Adrenal gland (tissue), 19 donors: ENCODE measurements at regions of chr15 and their contacts with region 1.

Region 1: DNA sequence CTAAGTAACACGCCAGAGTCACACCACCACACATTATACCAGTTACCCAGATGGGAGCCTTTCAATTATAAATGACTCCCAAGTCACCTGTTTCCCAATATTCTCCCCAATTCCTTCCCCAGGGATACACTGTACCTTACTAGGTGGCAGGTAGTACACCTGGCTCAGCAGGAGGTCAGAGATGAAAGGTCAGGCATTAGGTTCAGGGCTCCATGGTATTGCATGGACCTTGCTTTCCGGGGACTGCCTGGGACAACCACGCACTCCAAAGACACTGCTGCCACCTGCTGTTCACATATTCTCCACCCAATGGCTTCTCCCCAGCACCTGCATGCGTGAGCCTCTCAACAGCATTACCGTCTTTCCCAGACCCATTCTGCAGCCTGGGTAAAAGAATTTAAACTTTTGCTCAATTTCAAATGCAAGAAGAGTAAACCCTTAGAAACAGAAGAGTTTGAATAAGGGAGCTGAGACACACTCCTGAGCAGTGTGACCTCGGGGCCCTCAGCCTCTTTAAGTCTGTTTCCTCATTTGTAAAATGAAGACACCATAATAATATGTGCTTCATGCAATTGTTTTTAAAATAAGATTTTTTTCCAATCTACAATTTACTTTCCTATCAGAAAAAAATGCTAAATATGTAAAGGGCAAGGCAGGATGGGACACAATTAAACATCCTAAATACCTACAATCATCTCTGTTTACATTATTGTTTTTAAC is 28.0 kb upstream of the LACTB start:
- DNase-seq: peak; percentile 78 to 94 (median 86)
- H3K4me3 ChIP-seq: no peak overlapping the region
- H3K27ac ChIP-seq: no peak overlapping the region
- H3K4me1 ChIP-seq: peaks cover 0 to 5% of the 10 kb centered on the region in 2 donors
- H3K27me3 ChIP-seq: no peaks in the 10 kb centered on the region
- CTCF ChIP-seq: peak; percentile 61 to 95 (median 93)
- POLR2A ChIP-seq: no peak

Region 2: DNA sequence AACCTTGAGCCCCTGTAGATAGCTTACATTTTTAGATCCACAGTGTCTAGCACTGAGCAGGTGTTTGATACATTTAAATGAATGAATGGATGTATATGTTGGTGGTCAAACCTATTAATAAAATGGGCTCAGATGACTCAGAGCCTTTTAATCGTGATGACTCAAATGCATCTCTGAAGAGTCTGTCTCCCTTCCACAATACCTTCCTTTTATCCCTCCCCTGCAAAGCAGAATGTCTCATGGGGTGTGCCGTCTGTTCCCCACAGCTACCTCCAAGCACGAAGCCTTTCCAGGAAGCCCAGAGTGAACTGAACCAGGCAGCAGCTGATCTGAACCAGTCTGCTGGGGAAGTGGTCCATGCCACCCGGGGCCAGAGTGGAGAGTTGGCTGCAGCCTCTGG is 354.6 kb before region 1 on chr15:
- intact Hi-C with region 1: no loop called
- DNase-seq: no peak
- H3K4me3 ChIP-seq: no peak overlapping the region
- H3K27ac ChIP-seq: no peak overlapping the region
- H3K4me1 ChIP-seq: peaks cover 0 to 4% of the 10 kb centered on the region in 2 donors
- H3K27me3 ChIP-seq: no peaks in the 10 kb centered on the region
- CTCF ChIP-seq: no peak
- POLR2A ChIP-seq: no peak

Region 3: DNA sequence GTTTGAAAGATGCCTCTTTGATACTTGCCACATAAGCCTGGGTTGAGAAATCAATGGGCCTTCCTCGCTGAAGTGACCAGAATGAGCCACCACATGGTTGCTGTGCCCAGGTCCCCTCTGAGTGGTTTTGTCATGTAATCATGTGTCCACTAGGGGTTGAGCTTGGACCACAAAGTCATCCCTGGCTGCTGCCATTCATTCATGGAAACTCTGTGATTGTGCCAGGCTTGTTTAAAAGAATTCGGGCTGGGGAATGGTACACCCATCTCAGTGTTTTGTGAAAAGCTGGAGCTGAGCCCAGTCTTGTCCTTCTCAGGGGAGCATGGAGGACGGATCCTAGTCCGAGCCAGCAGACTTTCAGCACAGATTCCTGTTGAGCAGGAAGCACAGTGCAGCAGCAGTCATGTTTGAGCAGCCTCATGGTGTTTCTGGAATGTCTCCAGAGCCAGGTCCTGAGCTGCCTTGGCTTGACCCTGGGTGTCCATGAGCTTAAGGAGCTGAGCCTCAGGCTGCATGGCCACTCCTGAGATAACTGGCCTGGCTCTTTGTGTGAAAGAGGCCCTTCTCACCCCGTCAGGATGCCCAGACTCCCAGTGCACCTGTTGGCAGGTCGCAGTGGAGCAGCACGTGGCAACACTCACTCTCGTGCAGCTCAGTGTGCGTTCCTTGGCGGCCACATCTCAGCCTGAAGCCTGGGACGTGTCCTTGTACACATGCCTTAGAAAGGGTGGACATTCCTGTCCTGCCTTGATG is 311.4 kb before region 1 on chr15:
- intact Hi-C with region 1: loop called (anchors 5 kb)
- DNase-seq: peak; percentile 54 to 89 (median 73)
- H3K4me3 ChIP-seq: no peak overlapping the region
- H3K27ac ChIP-seq: peak overlapping the region in 2 of 5 donors; percentile 22 to 41
- H3K4me1 ChIP-seq: peaks cover 7 to 18% of the 10 kb centered on the region in 2 donors
- H3K27me3 ChIP-seq: no peaks in the 10 kb centered on the region
- CTCF ChIP-seq: peak; percentile 51 to 82 (median 70)
- POLR2A ChIP-seq: no peak

Region 4: DNA sequence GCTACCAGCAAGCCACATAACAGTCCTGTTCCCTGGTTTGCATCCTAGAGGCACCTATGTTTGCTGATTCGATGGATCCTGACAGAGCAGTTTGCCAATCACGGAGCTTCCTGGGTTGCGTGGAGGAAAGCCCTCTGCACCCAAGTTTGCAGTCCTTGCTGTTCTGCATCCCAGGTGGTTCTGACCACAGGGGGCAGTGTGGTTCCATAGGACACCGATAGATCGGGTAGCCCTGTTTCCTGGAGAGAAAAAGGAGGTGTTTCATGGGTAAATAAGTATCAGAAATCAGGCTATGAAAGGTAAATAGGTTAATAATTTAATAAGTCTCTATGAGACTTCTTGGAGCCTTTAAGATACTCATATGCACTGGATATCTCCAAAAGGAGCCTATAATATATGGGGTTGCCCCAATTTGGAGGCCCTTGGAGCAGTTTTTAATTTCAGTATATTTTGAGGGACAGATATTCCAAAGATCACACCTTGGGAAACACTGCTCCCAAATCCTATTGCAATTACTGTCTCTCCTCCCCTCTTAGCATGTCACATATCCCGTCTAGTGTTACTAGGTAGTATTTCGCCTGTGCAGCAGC is 245.7 kb before region 1 on chr15:
- intact Hi-C with region 1: loop called in 1 of 2 experiments (anchors 10 kb)
- DNase-seq: peak; percentile 41 to 79 (median 73)
- H3K4me3 ChIP-seq: no peak overlapping the region
- H3K27ac ChIP-seq: no peak overlapping the region
- H3K4me1 ChIP-seq: no peaks in the 10 kb centered on the region
- H3K27me3 ChIP-seq: no peaks in the 10 kb centered on the region
- CTCF ChIP-seq: peak; percentile 46 to 67 (median 56)
- POLR2A ChIP-seq: no peak

Region 5: DNA sequence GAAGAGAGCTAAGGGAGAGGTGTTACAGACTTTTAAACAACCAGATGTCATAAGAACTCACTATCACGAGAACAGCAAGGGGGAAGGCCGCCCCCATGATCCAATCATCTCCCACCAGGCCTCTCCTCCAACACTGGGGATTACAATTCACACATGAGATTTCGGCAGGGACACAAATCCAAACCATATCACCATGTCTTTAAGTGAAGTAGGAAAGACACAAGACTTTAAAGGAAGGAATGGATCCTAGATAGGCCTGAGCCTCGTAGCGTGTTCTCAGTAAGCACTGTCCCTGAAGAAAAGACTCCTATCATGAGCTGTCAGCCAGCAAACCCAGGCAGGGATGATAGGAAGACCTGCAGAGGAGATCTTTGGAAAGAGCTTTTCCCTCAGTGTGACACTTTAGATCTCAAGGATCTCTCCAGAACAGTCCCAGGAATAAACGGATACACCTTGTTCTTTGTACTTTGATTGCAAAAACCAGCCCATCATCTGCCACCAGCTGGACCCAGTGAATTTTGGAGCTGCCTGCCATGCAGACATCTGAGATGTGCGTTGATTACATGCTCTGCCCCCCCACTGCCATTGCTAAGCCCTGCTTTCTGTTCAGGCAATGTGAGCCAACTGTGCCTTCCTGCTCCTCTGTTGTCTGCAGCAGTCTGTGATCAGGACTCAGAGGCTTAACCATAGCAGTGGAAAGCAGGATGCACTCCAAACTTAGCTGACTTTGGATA is 78.9 kb after region 1 on chr15:
- intact Hi-C with region 1: no loop called
- DNase-seq: no peak
- H3K4me3 ChIP-seq: no peak overlapping the region
- H3K27ac ChIP-seq: no peak overlapping the region
- H3K4me1 ChIP-seq: no peaks in the 10 kb centered on the region
- H3K27me3 ChIP-seq: no peaks in the 10 kb centered on the region
- CTCF ChIP-seq: no peak
- POLR2A ChIP-seq: no peak